ENCODE measurements at regions of chr6 and their contacts with region 1.

Region 1: DNA sequence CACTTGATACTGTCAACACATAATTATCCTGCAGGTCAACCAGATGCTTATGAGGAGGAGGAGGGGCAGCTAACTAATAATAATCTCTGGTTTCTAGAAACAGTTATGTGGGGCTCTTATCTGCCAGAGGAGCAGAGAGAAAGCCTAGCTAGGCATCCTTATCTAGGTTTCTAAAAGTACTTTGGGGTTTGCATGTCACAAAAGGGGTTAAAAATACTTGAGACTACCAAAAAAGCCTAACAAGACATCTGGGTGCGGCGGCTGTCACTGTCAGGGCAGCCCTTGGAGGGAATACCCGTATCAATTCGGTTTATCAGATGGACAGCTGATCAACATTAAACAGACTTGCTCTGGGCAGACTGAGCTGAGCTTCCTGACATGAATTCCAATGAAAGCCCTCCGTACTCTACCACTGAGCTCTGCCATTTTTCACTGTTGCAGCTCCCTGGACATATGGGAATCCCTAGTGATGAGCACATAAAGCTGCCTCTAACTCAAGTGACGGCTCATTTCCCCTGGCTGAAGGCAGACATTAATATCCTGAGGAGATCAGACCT is 166.6 kb downstream of the PDSS2 start:
- DNase-seq: no peak
- H3K4me3 ChIP-seq: no peak overlapping the region
- H3K27ac ChIP-seq: no peak overlapping the region
- H3K4me1 ChIP-seq: no peaks in the 10 kb centered on the region
- H3K27me3 ChIP-seq: no peaks in the 10 kb centered on the region
- CTCF ChIP-seq: no peak

Region 2: GRCh38 chr6:107202846-107203468 is 89.8 kb before region 1 on chr6:
- CTCF ChIA-PET with region 1: no interaction called
- dilution Hi-C with region 1: no loop called
- in situ Hi-C with region 1: no loop called
- intact Hi-C with region 1: no loop called
- DNase-seq: no peak
- H3K4me3 ChIP-seq: no peak overlapping the region
- H3K27ac ChIP-seq: no peak overlapping the region
- H3K4me1 ChIP-seq: peaks cover 10% of the 10 kb centered on the region
- H3K27me3 ChIP-seq: no peaks in the 10 kb centered on the region
- CTCF ChIP-seq: no peak

Region 3: DNA sequence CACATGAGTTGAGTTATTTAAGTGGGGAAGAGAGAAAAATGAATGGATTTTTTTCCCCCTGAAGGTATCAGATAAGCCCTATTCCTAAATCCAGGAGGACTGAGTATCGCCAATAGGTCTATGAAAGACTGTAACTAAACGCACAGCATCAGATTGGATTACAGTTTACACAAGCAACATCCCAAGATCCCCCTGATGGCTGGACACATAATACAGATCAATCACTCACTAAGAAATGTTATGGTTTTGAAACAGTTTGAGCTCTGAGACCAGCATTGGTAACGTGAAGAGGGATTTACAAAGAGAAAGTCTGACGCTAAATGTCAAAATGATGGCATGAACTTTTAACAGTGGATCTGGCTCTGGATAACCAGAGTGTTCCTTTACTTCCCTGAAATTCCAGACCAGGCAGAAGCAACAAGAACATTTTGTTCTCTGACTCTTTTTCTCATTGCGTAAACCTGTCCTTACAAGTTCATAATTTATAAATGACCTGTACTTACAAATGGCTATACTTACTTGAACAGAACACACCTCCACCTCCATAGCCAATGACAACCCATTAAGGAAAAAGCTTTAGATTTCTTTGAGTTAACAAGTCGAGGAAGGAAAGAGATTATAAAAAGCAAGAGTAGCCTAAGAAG is 45.7 kb before region 1 on chr6:
- CTCF ChIA-PET with region 1: no interaction called
- dilution Hi-C with region 1: loop called (anchors 5 kb)
- in situ Hi-C with region 1: no loop called
- intact Hi-C with region 1: no loop called
- DNase-seq: peak; percentile 72
- H3K4me3 ChIP-seq: peak overlapping the region; percentile 21 to 38 (median 29)
- H3K27ac ChIP-seq: peak overlapping the region; percentile 92
- H3K4me1 ChIP-seq: peaks cover 41% of the 10 kb centered on the region
- H3K27me3 ChIP-seq: no peaks in the 10 kb centered on the region
- CTCF ChIP-seq: no peak

Region 4: GRCh38 chr6:108294727-108295625 is 1002.2 kb after region 1 on chr6 and contains the start of gene AFG1L:
- CTCF ChIA-PET with region 1: no interaction called
- dilution Hi-C with region 1: no loop called
- in situ Hi-C with region 1: no loop called
- intact Hi-C with region 1: no loop called
- DNase-seq: peak; percentile 91
- H3K4me3 ChIP-seq: peak within 1 kb of the TSS; percentile 62 to 97 (median 92)
- H3K27ac ChIP-seq: peak within 1 kb of the TSS; percentile 89
- H3K4me1 ChIP-seq: peaks cover 5% of the 10 kb centered on the region
- H3K27me3 ChIP-seq: no peaks in the 10 kb centered on the region
- CTCF ChIP-seq: no peak
- total RNA-seq, gene AFG1L: 5.0 to 8.7 TPM

Measured in mammary epithelial cell (primary cell).